Right ventricle myocardium inferior (tissue), 1 donor: ENCODE measurements at regions of chr4 and their contacts with region 1.

Region 1: GRCh38 chr4:4995103-4995907 is 24.0 kb downstream of the CYTL1 start:
- DNase-seq: peak; percentile 77
- ATAC-seq: peak; percentile 53

Region 2: GRCh38 chr4:4488405-4489404 is 506.6 kb before region 1 on chr4:
- intact Hi-C with region 1: loop called (anchors 10 kb)
- DNase-seq: no peak
- ATAC-seq: peak; percentile 82

Region 3: DNA sequence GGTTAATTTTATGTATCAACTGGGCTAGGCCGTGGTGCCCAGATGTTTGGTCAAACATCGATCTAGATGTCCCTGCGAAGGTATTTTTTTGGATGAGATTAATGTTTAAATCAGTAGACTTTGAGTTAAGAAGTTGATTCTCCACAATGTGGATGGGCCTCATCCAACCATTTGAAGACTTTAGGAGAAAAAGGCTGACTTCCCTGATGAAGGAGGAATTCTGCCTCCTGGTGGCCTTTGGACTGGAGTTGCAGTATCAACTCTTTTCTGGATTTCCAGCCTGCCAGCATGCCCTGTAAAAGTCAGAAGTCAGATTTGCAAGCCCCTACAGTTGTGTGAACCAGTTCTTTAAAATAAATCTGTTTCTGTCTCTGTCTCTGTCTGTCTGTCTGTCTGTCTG is 147.4 kb after region 1 on chr4:
- intact Hi-C with region 1: loop called (anchors 5 kb)
- DNase-seq: no peak
- ATAC-seq: no peak